Breast epithelium (tissue), 4 donors: ENCODE measurements at regions of chr3 and their contacts with region 1.

Region 1: DNA sequence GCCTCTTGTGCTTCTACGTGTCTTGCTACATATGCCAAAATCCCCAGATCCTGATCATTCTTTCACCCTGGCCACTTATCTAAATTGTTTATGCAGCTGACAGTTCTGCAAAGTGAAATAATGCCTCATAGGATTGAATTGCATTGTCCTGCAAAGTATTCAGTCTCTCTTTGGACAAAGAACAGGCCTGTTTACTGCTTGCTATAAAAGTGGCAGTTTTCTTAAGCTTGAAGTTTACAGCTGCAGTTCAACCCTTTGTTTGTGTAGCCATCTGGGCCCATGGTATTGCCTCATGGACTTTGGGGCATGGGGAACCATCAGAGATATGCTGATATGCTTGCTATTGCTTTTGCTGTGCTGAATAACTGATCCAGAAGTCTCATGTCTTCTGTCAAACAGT is 523.2 kb downstream of the OTOL1 start:
- DNase-seq: no peak
- H3K4me3 ChIP-seq: no peak overlapping the region
- H3K27ac ChIP-seq: no peak overlapping the region
- H3K4me1 ChIP-seq: no peaks in the 10 kb centered on the region
- H3K27me3 ChIP-seq: no peaks in the 10 kb centered on the region
- CTCF ChIP-seq: no peak
- POLR2A ChIP-seq: no peak

Region 2: DNA sequence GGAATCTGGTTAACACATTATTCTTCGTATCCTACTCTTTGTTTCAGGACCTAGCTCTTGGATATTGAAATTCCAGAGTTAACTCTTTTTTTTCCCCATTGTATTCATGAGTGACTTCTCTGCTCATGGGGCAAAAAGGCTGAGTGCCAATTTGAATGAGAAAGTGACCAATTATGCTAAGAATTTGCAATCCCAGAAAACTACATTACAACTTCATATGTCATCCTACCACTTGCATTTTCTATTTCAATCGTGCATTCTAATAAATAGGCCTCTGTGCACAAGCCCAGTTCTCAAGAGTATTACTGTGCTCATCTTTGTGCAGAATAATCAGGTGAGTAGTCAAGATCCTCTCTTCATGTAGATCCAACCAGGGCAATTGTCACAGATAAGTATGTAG is 14.6 kb after region 1 on chr3:
- intact Hi-C with region 1: loop called (anchors 2 kb)
- DNase-seq: no peak
- H3K4me3 ChIP-seq: no peak overlapping the region
- H3K27ac ChIP-seq: no peak overlapping the region
- H3K4me1 ChIP-seq: no peaks in the 10 kb centered on the region
- H3K27me3 ChIP-seq: no peaks in the 10 kb centered on the region
- CTCF ChIP-seq: no peak
- POLR2A ChIP-seq: no peak